Breast epithelium (tissue), 4 donors: ENCODE measurements at regions of chr9 and their contacts with region 1.

Region 1: DNA sequence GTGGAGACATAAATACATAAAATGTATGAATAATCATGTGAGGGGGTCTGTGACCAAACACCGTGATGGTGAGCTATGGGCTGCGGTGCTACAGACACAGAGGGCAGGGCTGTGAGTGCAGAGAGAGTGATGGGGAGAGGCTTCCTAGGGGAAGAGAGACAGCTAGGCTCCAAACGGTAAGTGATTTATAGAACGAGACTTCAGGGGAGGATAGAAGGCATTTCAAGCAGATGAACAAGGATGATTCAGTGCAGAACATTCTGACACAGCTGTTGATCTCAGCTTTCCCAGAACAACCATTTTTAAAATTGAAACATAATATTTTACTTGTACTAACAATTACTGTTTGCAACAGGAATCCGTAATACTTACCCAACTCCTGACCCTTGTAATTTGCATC is 100.7 kb downstream of the GAS1 start:
- DNase-seq: no peak
- H3K4me3 ChIP-seq: no peak overlapping the region
- H3K27ac ChIP-seq: no peak overlapping the region
- H3K4me1 ChIP-seq: no peaks in the 10 kb centered on the region
- H3K27me3 ChIP-seq: no peaks in the 10 kb centered on the region
- CTCF ChIP-seq: no peak
- POLR2A ChIP-seq: no peak

Region 2: GRCh38 chr9:87148331-87149104 is 301.9 kb after region 1 on chr9:
- intact Hi-C with region 1: loop called (anchors 5 kb)
- DNase-seq: peak; percentile 56 to 74
- H3K4me3 ChIP-seq: peak overlapping the region; percentile 32 to 66 (median 48)
- H3K27ac ChIP-seq: peak overlapping the region; percentile 87 to 89
- H3K4me1 ChIP-seq: no peaks in the 10 kb centered on the region
- H3K27me3 ChIP-seq: no peaks in the 10 kb centered on the region
- CTCF ChIP-seq: peak in 1 of 3 donors; percentile 21
- POLR2A ChIP-seq: no peak